Activated B cell treated with CpG ODN at 0.5 μM for 24 hours (primary cell): ENCODE measurements at regions of chr9 and their contacts with region 1.

Region 1: DNA sequence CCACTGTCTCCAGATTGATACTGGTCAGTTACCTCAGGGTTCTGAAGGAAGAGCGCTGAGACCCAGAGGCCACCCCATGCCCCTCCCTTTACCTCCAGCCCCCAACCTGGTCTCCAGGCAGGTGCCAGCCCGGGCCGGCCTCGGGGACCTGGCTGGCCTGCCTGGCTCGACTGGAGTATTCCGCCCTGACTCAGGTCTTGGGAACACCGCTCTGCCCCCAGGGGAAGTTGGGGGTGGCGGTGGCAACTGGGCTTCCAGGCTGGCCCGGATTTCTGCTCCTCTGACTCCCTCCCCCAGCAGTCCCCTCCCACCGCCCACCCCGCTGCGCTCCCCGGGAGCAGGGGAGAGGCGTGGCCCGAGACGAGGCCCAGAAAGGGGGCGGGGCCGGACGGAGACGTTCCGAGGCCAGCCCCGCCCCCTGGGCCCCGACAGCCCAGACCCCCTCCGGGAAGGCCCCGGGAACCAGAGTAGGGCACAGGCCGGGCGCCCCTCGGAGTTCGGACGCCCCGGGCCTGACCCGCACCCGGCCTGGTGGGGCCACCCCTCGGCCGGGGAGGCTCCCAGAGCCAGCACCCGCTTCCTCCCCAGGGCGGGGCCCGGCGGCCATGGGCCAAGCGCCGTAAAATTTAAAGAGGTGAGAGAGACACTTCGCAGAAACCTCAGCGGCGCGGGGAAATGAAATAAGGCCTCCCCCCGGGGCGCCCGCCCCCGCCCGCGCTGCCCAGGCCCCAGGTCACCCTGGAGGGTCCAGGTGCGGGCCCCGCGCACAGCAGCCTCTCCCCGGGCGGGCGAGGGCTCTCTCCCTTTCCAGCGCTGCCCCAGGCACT is 82.4 kb upstream of the ZBTB43 start:
- DNase-seq: peak; percentile 92
- ATAC-seq: peak; percentile 75
- H3K4me3 Mint-ChIP-seq: peak overlapping the region; percentile 90
- H3K27ac Mint-ChIP-seq: peak overlapping the region; percentile 96
- H3K4me1 Mint-ChIP-seq: peaks cover 47% of the 10 kb centered on the region
- H3K27me3 Mint-ChIP-seq: no peaks in the 10 kb centered on the region
- CTCF ChIP-seq: no peak

Region 2: GRCh38 chr9:126673689-126674364 is 48.6 kb before region 1 on chr9:
- CTCF ChIA-PET with region 1: no interaction called
- POLR2A ChIA-PET with region 1: no interaction called
- intact Hi-C with region 1: no loop called
- DNase-seq: no peak
- ATAC-seq: no peak
- H3K4me3 Mint-ChIP-seq: no peak overlapping the region
- H3K27ac Mint-ChIP-seq: no peak overlapping the region
- H3K4me1 Mint-ChIP-seq: no peaks in the 10 kb centered on the region
- H3K27me3 Mint-ChIP-seq: peaks cover 34% of the 10 kb centered on the region
- CTCF ChIP-seq: no peak

Region 3: DNA sequence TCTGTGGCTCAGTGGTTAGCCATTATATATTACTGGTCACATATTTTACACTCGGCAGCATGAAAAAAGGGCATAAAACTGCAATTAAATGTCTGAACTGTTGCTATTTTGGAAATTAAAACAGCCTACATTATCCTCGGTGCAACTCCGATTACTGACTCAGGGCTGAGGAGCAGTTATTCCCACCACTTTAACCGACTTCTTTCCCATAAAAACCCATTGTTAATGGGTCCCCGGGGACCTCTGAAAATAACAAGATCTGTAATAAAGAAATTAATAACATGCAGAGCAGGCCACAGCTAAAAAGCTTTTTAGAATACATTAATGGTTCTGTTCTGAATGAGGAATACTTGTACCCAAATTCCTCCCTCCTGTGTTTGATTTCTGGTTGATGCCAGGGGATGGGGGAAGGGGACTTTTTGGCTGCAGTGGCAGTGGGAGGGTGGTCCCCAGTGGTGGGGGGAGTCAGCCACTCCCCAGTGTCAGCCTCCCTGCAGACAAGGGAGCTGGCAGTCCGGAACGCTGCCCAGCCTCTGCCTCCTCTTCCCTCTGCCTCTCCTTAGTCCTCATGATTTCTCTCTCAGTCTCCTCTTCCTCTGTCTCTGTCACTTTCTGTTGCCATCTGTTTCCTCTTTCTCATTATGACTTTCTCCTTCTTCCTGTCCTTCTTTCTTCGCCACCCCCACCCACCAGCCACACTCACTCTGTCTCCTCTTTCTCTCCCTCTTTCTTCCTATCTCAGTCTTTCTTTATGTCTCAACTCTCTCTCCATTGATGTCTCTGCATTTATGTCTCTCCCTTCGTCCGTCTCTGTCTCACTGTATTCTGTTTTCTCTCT is 23.3 kb after region 1 on chr9:
- CTCF ChIA-PET with region 1: no interaction called
- POLR2A ChIA-PET with region 1: interaction called, 17 read pairs
- intact Hi-C with region 1: no loop called
- DNase-seq: no peak
- ATAC-seq: peak; percentile 52
- H3K4me3 Mint-ChIP-seq: peak overlapping the region; percentile 25
- H3K27ac Mint-ChIP-seq: peak overlapping the region; percentile 73
- H3K4me1 Mint-ChIP-seq: peaks cover 37% of the 10 kb centered on the region
- H3K27me3 Mint-ChIP-seq: peaks cover under 1% of the 10 kb centered on the region
- CTCF ChIP-seq: no peak

Region 4: GRCh38 chr9:126804696-126805545 is 82.5 kb after region 1 on chr9 and contains the start of gene ZBTB43:
- CTCF ChIA-PET with region 1: interaction called, 4 read pairs
- POLR2A ChIA-PET with region 1: interaction called, 25 read pairs
- intact Hi-C with region 1: loop called (anchors 1 kb)
- DNase-seq: peak; percentile 97
- ATAC-seq: peak; percentile 82
- H3K4me3 Mint-ChIP-seq: peak within 1 kb of the TSS; percentile 92
- H3K27ac Mint-ChIP-seq: peak within 1 kb of the TSS; percentile 96
- H3K4me1 Mint-ChIP-seq: peaks cover 31% of the 10 kb centered on the region
- H3K27me3 Mint-ChIP-seq: no peaks in the 10 kb centered on the region
- CTCF ChIP-seq: no peak
- total RNA-seq, gene ZBTB43: 20.3 and 22.8 TPM in 2 replicates